Naive thymus-derived CD4-positive, alpha-beta T cell (primary cell): ENCODE measurements at regions of chr2 and their contacts with region 1.

Region 1: DNA sequence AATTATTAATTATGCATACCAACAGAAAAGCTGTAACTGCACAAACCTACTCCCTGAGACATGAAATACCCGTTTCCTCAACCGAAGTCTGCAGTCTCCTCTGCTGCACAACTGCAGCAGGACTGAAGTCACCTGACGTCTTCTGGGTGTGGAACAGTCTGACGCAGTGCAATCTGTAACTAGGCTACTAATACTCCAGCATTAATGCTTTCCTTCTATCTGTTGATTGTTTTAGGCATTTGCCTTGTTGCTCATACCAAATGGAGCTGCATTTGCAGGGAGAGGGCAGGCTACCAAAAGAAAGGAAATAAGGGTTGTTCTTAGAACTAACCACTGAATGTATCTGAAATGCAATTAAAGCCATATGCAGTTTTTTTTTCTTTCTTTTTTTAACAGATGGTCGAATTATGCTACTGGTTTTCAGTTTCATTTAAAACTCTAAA is 40.1 kb downstream of the RTN4 start:
- DNase-seq: peak; percentile 15 to 71 (median 60)
- ATAC-seq: peak; percentile 94
- H3K4me3 ChIP-seq: peak overlapping the region; percentile 58
- H3K4me3 Mint-ChIP-seq: peak overlapping the region; percentile 88 to 97 (median 92)
- H3K27ac ChIP-seq: peak overlapping the region; percentile 68
- H3K27ac Mint-ChIP-seq: peak overlapping the region; percentile 82 to 96 (median 90)
- H3K4me1 ChIP-seq: peaks cover 27 to 29% of the 10 kb centered on the region in 2 donors
- H3K4me1 Mint-ChIP-seq: peaks cover 44 to 91% (median 79%) of the 10 kb centered on the region in 7 donors
- H3K27me3 ChIP-seq: no peaks in the 10 kb centered on the region
- H3K27me3 Mint-ChIP-seq: no peaks in the 10 kb centered on the region

Region 2: GRCh38 chr2:54665436-54665856 is 344.7 kb before region 1 on chr2:
- CTCF ChIA-PET with region 1: no interaction called
- POLR2A ChIA-PET with region 1: no interaction called
- intact Hi-C with region 1: loop called in 1 of 2 experiments (anchors 5 kb)
- DNase-seq: peak in 7 of 9 donors; percentile 15 to 61 (median 50)
- ATAC-seq: peak; percentile 82
- H3K4me3 ChIP-seq: no peak overlapping the region
- H3K4me3 Mint-ChIP-seq: no peak overlapping the region
- H3K27ac ChIP-seq: no peak overlapping the region
- H3K27ac Mint-ChIP-seq: peak overlapping the region in 8 of 9 donors; percentile 42 to 96 (median 86)
- H3K4me1 ChIP-seq: no peaks in the 10 kb centered on the region
- H3K4me1 Mint-ChIP-seq: peaks cover 0 to 20% (median 5%) of the 10 kb centered on the region in 7 donors
- H3K27me3 ChIP-seq: no peaks in the 10 kb centered on the region
- H3K27me3 Mint-ChIP-seq: no peaks in the 10 kb centered on the region

Region 3: GRCh38 chr2:54814389-54815147 is 195.6 kb before region 1 on chr2:
- CTCF ChIA-PET with region 1: no interaction called
- POLR2A ChIA-PET with region 1: no interaction called
- intact Hi-C with region 1: no loop called
- DNase-seq: no peak
- ATAC-seq: no peak
- H3K4me3 ChIP-seq: no peak overlapping the region
- H3K4me3 Mint-ChIP-seq: no peak overlapping the region
- H3K27ac ChIP-seq: no peak overlapping the region
- H3K27ac Mint-ChIP-seq: no peak overlapping the region
- H3K4me1 ChIP-seq: no peaks in the 10 kb centered on the region
- H3K4me1 Mint-ChIP-seq: no peaks in the 10 kb centered on the region
- H3K27me3 ChIP-seq: no peaks in the 10 kb centered on the region
- H3K27me3 Mint-ChIP-seq: peaks cover 10 to 20% (median 14%) of the 10 kb centered on the region in 5 donors

Region 4: GRCh38 chr2:54986264-54986663 is 23.9 kb before region 1 on chr2:
- CTCF ChIA-PET with region 1: no interaction called
- POLR2A ChIA-PET with region 1: no interaction called
- intact Hi-C with region 1: loop called in 1 of 2 experiments (anchors 2 kb)
- DNase-seq: no peak
- ATAC-seq: no peak
- H3K4me3 ChIP-seq: no peak overlapping the region
- H3K4me3 Mint-ChIP-seq: no peak overlapping the region
- H3K27ac ChIP-seq: no peak overlapping the region
- H3K27ac Mint-ChIP-seq: no peak overlapping the region
- H3K4me1 ChIP-seq: peaks cover 4 to 6% of the 10 kb centered on the region in 2 donors
- H3K4me1 Mint-ChIP-seq: peaks cover 16 to 69% (median 41%) of the 10 kb centered on the region in 7 donors
- H3K27me3 ChIP-seq: no peaks in the 10 kb centered on the region
- H3K27me3 Mint-ChIP-seq: no peaks in the 10 kb centered on the region

Region 5: DNA sequence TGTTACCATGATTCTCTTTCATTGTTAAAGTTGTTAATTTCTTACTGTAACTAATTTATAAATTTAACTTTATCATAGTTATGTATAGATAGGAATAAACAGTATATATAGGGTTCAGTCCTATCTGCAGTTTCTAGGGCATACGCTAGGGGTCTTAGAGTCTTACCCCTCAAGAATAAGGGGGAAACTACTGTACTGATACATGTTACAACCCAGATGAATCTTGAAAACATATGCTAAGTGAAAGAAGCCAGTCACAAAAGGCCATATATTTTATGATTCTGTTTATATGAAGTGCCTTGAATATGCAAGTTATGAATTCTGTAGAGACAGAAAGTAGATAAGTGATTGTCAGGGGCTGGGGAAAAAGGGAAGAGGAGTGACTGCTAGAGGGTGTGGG is 12.3 kb before region 1 on chr2:
- CTCF ChIA-PET with region 1: no interaction called
- POLR2A ChIA-PET with region 1: no interaction called
- intact Hi-C with region 1: loop called in 1 of 2 experiments (anchors 1 kb)
- DNase-seq: no peak
- ATAC-seq: no peak
- H3K4me3 ChIP-seq: no peak overlapping the region
- H3K4me3 Mint-ChIP-seq: peak overlapping the region in 4 of 10 donors; percentile 14 to 31 (median 29)
- H3K27ac ChIP-seq: no peak overlapping the region
- H3K27ac Mint-ChIP-seq: peak overlapping the region in 5 of 9 donors; percentile 16 to 37 (median 32)
- H3K4me1 ChIP-seq: peaks cover 11 to 18% of the 10 kb centered on the region in 2 donors
- H3K4me1 Mint-ChIP-seq: peaks cover 44 to 86% (median 78%) of the 10 kb centered on the region in 7 donors
- H3K27me3 ChIP-seq: no peaks in the 10 kb centered on the region
- H3K27me3 Mint-ChIP-seq: no peaks in the 10 kb centered on the region